Head of caudate nucleus (tissue), 42 donors: ENCODE measurements at regions of chr1 and their contacts with region 1.

Region 1: DNA sequence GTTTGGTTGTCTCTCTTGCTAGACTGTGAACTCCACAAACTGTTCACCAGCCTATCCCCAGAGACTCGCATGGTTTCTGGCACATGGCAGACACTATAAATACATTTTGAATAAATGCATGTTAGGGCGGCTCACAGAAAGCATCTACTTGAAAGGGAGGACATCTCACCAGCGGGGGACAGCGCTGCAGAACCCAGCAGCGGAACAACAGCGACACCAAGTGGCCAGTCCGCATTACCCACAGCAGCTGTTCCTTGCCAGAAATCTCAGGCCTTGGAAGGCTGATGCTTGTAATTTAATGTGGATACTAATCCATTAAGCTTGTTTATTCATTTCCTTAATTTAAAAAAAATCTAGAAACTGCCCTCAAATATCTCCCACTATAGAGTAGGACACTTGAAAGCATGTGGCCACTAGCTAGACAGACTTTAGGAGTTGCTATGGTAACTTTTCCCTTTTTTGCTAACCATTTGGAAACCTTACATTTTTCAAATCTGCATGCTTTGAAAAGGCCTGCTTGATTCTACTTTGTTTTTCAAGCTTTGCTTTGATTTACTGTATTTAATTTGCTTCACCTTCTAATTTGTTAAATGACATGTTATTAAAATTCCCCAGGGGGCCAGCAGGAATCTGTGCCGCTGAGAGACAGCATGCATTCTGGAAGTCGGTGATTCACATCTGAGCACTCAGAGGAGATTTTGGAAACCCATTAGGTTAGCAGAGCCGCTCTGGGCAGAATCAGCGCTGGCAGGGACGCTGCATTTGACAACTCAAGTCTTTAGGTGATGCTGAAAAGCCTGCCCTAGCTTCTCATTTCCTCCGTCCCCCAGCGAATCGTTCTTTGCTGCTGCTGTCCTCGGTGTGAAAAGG is 63.5 kb upstream of the SSX2IP start:
- DNase-seq: peak; percentile 75 to 96 (median 87)

Region 2: GRCh38 chr1:83931658-83932253 is 822.0 kb before region 1 on chr1:
- intact Hi-C with region 1: loop called (anchors 10 kb)
- DNase-seq: peak in 12 of 42 donors; percentile 29 to 78 (median 51)

Region 3: GRCh38 chr1:84143796-84144565 is 609.8 kb before region 1 on chr1 and contains the start of gene PRKACB:
- intact Hi-C with region 1: loop called (anchors 5 kb)
- DNase-seq: no peak

Region 4: DNA sequence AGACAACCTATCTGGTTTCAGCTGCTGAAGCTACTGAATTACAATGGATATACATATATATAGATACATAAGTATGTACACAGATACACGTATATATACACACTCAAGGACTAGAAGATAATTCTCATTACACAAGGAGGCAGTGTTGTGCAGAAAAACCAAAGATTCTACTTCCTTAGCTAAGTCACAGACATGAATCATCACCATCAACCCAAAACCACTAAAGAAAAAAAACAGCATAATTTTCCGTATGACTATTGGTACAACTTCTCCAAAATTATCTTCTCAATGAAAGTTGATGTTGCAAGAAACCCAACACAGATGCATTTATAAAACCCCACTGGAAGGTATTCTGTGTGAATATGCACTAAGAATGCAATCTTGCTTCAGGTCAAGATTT is 311.5 kb before region 1 on chr1:
- intact Hi-C with region 1: loop called (anchors 5 kb)
- DNase-seq: peak in 4 of 42 donors; percentile 16 to 39 (median 26)

Region 5: DNA sequence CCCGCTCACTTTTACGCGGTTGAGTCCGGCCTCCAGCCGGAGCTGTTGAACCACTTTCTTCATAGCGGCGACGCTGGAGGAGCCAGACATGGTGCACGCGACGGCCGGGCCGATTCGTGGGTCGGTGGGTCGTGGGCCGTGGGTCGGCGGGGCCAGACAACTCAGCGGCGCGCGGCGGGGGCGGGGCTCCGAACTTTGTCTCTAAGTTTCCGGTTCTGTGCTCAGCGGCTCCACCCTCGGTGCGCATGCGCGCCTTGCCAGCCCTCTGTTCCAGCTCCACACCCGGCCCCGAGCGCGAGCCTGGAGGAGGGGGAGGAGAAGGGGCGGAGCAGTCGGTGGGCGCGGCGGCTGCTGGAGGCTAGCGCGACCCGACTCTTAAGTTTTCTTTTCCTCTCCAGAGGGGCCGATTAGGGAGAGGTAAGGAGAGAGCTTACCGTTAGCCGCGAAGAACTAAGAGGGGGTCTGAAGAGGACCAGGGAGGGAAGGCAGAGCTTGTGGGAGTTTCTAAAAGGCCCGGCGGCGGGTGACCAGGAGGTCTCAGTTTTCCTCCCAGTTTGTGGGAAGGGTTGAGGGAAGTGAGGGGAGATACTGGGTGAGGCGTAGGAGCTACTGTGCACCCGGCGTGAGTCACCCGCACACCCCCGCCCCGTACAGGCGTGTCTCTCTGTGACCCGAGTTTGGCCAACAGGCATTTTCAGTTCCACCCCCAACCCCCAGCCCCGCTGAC is 247.6 kb before region 1 on chr1 and contains the starts of genes GNG5 and SPATA1:
- intact Hi-C with region 1: loop called (anchors 10 kb)
- DNase-seq: peak; percentile 90 to 99 (median 97)

Region 6: GRCh38 chr1:84620720-84621313 is 132.9 kb before region 1 on chr1:
- intact Hi-C with region 1: loop called (anchors 10 kb)
- DNase-seq: peak; percentile 37 to 90 (median 79)

Region 7: GRCh38 chr1:84724128-84724860 is 29.5 kb before region 1 on chr1:
- intact Hi-C with region 1: no loop called
- DNase-seq: peak in 1 of 42 donors; percentile 5